HCT116 (cell line): ENCODE measurements at regions of chr17 and their contacts with region 1.

Region 1: DNA sequence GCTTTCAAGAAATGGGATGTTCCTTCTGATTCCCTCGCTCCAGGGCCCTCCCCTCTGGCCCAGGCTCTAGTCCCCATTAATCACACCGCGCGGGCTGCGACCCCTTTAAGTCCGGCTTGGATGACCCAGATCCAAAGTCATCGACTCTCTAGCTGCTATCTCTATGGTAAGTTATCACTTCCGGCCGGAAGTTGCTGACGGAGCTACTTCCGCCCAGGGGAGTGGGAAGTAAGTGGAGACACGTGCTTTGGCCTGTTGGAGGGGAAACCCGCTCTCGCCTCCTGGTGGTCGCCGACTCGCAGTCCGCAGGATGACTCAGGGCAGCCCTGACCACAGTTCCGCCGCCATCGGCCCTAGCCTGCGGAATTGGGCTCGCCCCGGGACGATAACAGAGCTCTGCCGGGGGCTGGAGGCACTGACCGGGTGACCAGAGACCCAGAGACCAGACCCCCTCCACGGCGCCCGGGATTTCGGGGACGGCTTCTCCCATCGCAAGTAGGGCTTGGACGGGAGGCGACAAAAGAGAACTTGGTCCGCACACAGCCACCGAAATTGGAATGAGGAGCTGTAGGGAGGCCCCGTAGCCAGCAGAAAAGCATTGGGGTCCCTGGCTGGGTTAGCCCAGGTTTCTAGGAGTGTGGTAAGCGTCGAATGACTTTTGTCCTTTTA is 52.2 kb upstream of the SEC14L1 start:
- DNase-seq: peak; percentile 99
- ATAC-seq: peak; percentile 81
- H3K4me3 ChIP-seq: peak overlapping the region; percentile 83 to 100
- H3K27ac ChIP-seq: peak overlapping the region; percentile 89
- H3K4me1 ChIP-seq: peaks cover 15 to 34% of the 10 kb centered on the region in 2 experiments
- H3K27me3 ChIP-seq: no peaks in the 10 kb centered on the region
- CTCF ChIP-seq: peak; percentile 51 to 70 (median 59); a peak in 5 of 6 replicates
- POLR2A ChIP-seq: peak; percentile 69
- RAD21 ChIP-seq: peak; percentile 49

Region 2: GRCh38 chr17:77124192-77124889 is 35.8 kb after region 1 on chr17:
- CTCF ChIA-PET with region 1: interaction called, 18 read pairs
- POLR2A ChIA-PET with region 1: interaction called, 8 read pairs
- RAD21 ChIA-PET with region 1: interaction called in 1 of 2 experiments, 3 read pairs
- intact Hi-C with region 1: no loop called
- DNase-seq: peak; percentile 79
- ATAC-seq: peak; percentile 60
- H3K4me3 ChIP-seq: peak overlapping the region; percentile 17 to 42
- H3K27ac ChIP-seq: peak overlapping the region; percentile 75
- H3K4me1 ChIP-seq: peaks cover 56 to 87% of the 10 kb centered on the region in 2 experiments
- H3K27me3 ChIP-seq: no peaks in the 10 kb centered on the region
- CTCF ChIP-seq: no peak
- POLR2A ChIP-seq: no peak
- RAD21 ChIP-seq: no peak

Region 3: GRCh38 chr17:77214743-77215142 is 126.2 kb after region 1 on chr17:
- CTCF ChIA-PET with region 1: interaction called, 4 read pairs
- POLR2A ChIA-PET with region 1: no interaction called
- RAD21 ChIA-PET with region 1: interaction called in 1 of 2 experiments, 3 read pairs
- intact Hi-C with region 1: loop called (anchors 2 kb)
- DNase-seq: peak; percentile 56
- ATAC-seq: peak; percentile 98
- H3K4me3 ChIP-seq: no peak overlapping the region
- H3K27ac ChIP-seq: no peak overlapping the region
- H3K4me1 ChIP-seq: no peaks in the 10 kb centered on the region
- H3K27me3 ChIP-seq: no peaks in the 10 kb centered on the region
- CTCF ChIP-seq: peak; percentile 90 to 99 (median 92)
- POLR2A ChIP-seq: no peak
- RAD21 ChIP-seq: peak; percentile 79

Region 4: DNA sequence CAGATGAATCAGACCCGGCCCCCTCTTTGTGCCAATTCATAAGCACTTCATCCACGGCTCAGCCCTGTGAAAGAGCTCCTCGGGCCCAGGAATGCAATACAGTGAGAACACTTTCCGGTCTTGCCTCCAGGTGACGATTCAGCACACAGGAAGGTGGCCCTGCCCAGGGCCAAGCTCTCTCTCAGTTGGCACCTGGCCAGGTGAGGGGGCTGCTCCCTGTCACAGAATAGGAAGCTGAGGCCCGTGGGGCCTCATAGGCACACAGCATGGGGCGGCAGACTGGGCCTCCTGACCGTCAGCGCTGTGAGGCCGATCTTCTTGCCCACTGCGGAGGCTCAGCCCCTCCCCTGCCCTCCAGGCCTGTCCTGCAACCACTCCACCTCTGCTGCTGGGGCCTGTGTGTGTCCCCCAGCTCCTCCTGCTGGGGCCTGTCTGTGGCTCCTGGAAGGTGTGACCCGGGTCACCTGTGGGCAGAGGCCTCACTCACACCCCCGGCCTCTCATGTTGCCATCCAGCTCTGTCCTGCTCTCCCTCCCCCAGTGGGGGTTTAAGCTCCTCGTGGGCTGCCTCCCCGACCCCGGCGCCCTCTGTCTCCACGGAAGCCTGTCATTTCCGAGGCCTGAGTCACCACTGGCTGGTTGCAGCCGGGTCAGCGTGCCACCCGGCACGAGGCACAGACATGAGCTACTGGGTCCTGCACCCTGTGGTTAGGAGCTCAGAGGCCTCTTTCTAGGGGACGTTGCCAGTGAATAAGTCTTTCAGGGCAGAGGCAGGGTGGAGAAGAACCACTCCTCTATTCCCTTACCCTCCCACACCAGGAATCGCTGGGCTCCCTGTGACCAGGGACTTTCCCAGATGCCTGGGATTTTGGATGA is 166.6 kb after region 1 on chr17:
- CTCF ChIA-PET with region 1: interaction called, 19 read pairs
- POLR2A ChIA-PET with region 1: interaction called, 11 read pairs
- RAD21 ChIA-PET with region 1: interaction called in 1 of 2 experiments, 5 read pairs
- intact Hi-C with region 1: loop called (anchors 2 kb)
- DNase-seq: peak; percentile 89
- ATAC-seq: peak; percentile 83
- H3K4me3 ChIP-seq: peak overlapping the region; percentile 18 to 47
- H3K27ac ChIP-seq: peak overlapping the region; percentile 96
- H3K4me1 ChIP-seq: peaks cover 33 to 48% of the 10 kb centered on the region in 2 experiments
- H3K27me3 ChIP-seq: no peaks in the 10 kb centered on the region
- CTCF ChIP-seq: peak in 1 of 3 experiments; percentile 19; a peak in 2 of 6 replicates
- POLR2A ChIP-seq: no peak
- RAD21 ChIP-seq: no peak; the same call in 1 of the 2 replicates

Region 5: DNA sequence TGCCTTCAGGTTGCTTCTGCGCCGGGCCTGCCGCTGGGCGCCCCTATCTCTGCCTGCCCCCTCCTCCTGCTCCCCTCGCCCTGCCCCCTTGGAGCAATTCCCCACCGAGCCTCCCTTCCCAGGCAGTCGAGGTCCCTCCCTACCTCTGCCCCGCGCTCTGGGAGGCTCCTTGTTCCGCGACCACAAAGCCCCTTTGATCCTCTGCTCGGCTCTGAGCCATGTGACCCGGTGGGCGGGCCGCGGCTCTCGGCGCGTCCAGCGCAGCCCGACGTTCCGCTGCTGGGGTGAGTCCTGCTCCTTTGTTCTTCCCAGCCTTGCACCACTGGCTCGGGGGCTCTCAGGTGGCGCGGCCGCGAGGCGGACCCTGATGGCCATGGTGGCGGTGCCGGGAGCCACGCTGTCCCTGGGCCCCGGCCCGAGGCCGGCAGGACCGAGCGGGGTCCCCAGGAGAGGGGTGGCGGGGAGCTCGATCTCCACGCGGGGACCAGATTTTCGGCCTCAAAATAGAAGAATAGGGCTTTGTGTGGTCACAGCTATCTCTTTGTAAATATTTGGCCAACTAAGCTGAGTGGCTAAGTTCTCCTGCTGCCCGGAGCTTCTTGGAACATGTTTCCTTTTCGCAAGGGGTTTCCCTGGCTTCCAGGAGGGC is 362.8 kb after region 1 on chr17:
- CTCF ChIA-PET with region 1: no interaction called
- POLR2A ChIA-PET with region 1: no interaction called
- RAD21 ChIA-PET with region 1: no interaction called
- intact Hi-C with region 1: no loop called
- DNase-seq: no peak
- ATAC-seq: peak; percentile 31; the same call in 1 of the 2 replicates
- H3K4me3 ChIP-seq: no peak overlapping the region
- H3K27ac ChIP-seq: no peak overlapping the region; the same call in 1 of the 2 replicates
- H3K4me1 ChIP-seq: peaks cover 25 to 39% of the 10 kb centered on the region in 2 experiments
- H3K27me3 ChIP-seq: no peaks in the 10 kb centered on the region
- CTCF ChIP-seq: no peak
- POLR2A ChIP-seq: no peak
- RAD21 ChIP-seq: no peak

Region 6: DNA sequence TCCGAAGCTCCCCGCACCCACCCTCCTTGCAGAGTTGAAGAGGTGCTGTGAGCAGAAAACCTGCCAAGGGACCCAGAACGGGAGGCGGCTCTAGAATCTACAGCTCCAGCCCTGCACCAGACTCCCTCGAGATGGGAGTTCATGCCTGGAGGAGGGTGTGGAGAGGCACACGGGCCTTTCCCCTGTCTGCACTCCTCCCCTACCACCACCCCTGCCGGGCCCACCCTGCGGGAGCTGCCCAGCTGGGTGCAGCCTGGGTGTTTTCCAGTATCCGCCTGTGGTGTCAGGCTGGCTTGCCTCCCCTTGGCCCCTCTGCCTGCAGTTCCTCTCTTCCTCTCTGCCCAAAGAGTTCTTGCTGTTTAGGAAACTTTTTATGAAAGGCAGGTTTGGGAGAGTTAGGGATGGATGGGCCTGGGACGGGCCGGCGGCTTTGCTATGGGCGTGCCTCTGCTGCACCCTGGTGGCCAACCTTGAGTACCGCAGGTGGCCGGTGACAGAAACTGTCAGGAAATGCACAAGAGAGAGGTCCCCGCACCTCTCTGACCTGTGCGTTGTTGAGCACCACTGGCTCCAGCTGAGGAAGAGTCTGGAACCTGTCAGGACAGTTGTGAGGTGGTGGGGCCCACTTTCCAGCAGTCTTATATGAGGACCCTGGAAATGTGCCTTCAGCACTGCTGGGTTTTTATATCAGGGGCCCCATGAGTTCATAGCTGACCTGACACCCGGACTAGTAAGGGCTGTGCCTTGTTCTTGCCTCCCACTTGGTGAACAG is 406.3 kb after region 1 on chr17:
- CTCF ChIA-PET with region 1: no interaction called
- POLR2A ChIA-PET with region 1: no interaction called
- RAD21 ChIA-PET with region 1: no interaction called
- intact Hi-C with region 1: loop called (anchors 1 kb)
- DNase-seq: peak; percentile 45
- ATAC-seq: peak; percentile 87
- H3K4me3 ChIP-seq: no peak overlapping the region
- H3K27ac ChIP-seq: no peak overlapping the region; the same call in 1 of the 2 replicates
- H3K4me1 ChIP-seq: no peaks in the 10 kb centered on the region
- H3K27me3 ChIP-seq: no peaks in the 10 kb centered on the region
- CTCF ChIP-seq: peak; percentile 91 to 100 (median 99)
- POLR2A ChIP-seq: no peak
- RAD21 ChIP-seq: peak; percentile 99